ENCODE measurements at regions of chr9 and their contacts with region 1.

Region 1: DNA sequence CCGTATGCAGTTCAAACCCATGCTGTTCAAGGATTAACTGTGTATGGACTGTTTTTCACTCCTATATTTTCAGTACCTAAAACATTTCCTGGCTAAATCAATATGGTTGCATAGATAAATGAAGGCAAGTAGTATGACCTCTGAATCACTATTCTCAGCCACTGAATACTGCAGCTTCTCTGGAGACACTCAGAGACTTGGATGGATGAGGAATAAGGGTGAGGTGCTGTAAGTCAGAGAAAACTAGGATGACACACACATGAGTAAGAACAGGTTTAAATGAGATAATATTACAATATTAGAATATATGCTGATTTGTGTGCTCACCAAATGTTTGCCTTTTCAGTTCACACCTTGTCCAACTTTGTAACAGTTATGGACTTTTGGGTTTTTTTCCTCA is 26.0 kb upstream of the ANXA1 start:
- H3K4me3 Mint-ChIP-seq: no peak overlapping the region
- H3K27ac Mint-ChIP-seq: no peak overlapping the region
- H3K4me1 Mint-ChIP-seq: peaks cover 16% of the 10 kb centered on the region
- H3K27me3 Mint-ChIP-seq: no peaks in the 10 kb centered on the region

Region 2: GRCh38 chr9:73162987-73163768 is 37.5 kb after region 1 on chr9:
- intact Hi-C with region 1: loop called (anchors 5 kb)
- H3K4me3 Mint-ChIP-seq: no peak overlapping the region
- H3K27ac Mint-ChIP-seq: no peak overlapping the region
- H3K4me1 Mint-ChIP-seq: peaks cover 12% of the 10 kb centered on the region
- H3K27me3 Mint-ChIP-seq: no peaks in the 10 kb centered on the region

Measured in dendritic cell treated with granulocyte-macrophage colony-stimulating factor and Interleukin-4, amounts not matched to agents 40 ng/mL and 50 ng/mL, for 4 days (primary cell).